ENCODE measurements at regions of chr11 and their contacts with region 1.

Region 1: DNA sequence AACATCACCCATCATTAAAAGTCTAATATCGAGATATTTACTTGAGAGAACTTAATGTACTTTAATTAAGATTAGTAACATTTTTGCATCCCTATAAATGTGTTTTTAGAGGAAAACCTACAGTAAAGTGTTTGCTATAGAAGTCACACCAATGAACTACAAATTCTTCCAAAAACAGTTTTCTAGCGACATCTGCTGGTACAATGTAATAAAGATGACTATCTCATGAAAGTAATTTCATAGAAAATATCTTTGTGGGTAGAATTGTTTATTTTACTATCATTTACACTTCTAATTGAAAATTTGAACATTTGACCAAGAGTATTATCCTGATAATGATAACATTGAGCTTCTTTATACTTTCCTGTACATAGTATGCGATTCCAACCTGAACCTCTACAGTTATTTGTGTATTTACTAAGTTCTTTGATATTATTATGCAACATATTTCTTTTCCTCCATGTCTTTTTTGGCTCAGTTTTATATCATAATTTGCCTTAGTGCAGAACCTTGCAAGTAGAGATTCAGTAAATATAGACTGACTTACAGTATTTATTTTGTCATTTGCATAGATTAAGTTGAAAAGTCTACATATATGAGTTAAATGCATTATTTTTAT is 252.7 kb downstream of the TMEM135 start:
- DNase-seq: no peak
- H3K4me3 ChIP-seq: no peak overlapping the region
- H3K27ac ChIP-seq: no peak overlapping the region
- H3K4me1 ChIP-seq: no peaks in the 10 kb centered on the region
- H3K27me3 ChIP-seq: no peaks in the 10 kb centered on the region
- CTCF ChIP-seq: peak; percentile 22 to 75 (median 60)
- POLR2A ChIP-seq: no peak

Region 2: DNA sequence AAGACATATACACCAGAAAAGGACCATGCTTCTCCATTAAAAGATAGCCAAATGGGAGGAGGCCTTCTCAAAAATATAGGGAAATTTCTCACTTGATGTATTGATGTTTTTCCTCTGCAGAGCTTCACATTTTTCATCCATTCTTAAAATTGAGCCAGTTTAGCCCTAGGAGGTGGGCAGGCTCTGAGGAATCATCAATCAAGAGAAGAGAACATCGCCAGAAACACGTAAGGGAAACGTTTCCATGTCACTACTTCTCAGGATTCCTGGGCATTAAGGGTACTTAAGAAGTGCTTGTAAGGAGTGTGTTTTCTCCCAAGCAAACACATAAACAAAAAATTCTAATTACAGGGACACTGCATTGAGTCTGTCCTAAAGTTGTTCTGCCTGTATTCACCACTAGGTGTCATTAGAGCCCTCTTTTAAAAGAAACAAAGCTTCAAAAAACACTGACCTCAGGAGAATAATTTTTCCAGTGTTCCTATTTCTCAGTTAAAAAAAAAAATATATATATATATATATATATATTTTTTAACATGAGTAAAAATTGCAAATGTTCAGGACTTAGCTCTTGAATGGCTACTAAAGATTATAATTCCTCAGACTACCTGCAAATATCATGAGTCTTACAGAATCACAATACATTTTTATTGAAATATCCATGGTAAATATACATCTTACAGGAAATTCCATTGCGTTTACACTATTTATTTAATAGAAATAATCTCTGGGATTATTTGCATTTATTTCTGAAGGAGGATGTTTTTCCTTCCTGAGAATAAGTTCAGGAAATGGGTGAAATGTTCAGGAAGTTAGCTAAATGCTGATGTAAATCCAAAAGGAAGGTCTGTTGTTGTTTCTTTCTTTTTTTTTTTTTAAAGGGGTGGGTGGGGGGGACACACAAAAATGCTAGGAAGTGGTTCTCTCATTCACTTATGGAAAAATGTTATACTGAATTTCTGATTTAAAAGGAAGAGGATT is 351.2 kb before region 1 on chr11:
- intact Hi-C with region 1: loop called (anchors 5 kb)
- DNase-seq: no peak
- H3K4me3 ChIP-seq: no peak overlapping the region
- H3K27ac ChIP-seq: peak overlapping the region; percentile 68 to 84
- H3K4me1 ChIP-seq: peaks cover 4 to 12% of the 10 kb centered on the region in 2 donors
- H3K27me3 ChIP-seq: no peaks in the 10 kb centered on the region
- CTCF ChIP-seq: peak; percentile 56 to 71 (median 59)
- POLR2A ChIP-seq: no peak

Measured in breast epithelium (tissue), 4 donors.